GM10248 (cell line): ENCODE measurements at regions of chr11 and their contacts with region 1.

Region 1: GRCh38 chr11:125345421-125346178 is 150.5 kb downstream of the FEZ1 start:
- DNase-seq: peak; percentile 66
- CTCF ChIP-seq: peak; percentile 72

Region 2: GRCh38 chr11:125305345-125305744 is 40.3 kb before region 1 on chr11:
- CTCF ChIA-PET with region 1: interaction called, 11 read pairs
- POLR2A ChIA-PET with region 1: no interaction called
- DNase-seq: no peak
- CTCF ChIP-seq: no peak

Region 3: GRCh38 chr11:125329786-125330185 is 15.8 kb before region 1 on chr11:
- CTCF ChIA-PET with region 1: interaction called, 49 read pairs
- POLR2A ChIA-PET with region 1: no interaction called
- DNase-seq: no peak
- CTCF ChIP-seq: no peak

Region 4: DNA sequence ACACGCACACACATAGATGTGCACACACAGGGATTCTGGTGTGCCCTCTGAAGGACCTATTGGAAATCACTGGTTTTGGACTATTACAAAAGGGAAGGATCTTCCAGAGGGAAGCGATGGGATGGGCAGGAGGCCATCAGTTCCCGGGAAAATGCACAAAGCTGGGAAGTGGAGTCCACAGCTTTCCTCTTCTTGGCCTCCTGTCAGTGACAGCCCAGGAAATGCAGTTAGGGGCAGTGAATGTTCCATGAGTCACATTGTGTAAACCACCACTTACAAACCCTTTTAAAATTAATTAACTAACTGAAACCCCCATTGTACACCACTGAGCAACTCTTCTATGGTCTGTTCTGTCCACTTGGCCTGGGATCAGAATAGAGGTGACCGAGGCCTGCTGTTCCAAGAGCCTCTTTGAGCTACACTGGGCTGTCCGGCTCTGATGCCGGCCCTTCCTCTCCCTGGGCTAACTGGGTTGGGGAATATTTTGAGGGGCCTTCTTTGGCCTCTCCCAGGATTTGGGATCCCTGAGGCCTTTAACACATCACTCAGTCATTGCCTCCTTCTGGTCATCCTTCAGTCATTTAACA is 12.7 kb after region 1 on chr11:
- CTCF ChIA-PET with region 1: interaction called, 33 read pairs
- POLR2A ChIA-PET with region 1: no interaction called
- DNase-seq: no peak
- CTCF ChIP-seq: no peak